SK-N-SH (cell line): ENCODE measurements at regions of chr1 and their contacts with region 1.

Region 1: GRCh38 chr1:145845514-145846161 is at the start of gene NUDT17:
- DNase-seq: peak; percentile 90
- H3K4me3 ChIP-seq: peak within 1 kb of the TSS; percentile 60 to 68
- H3K27ac ChIP-seq: peak within 1 kb of the TSS; percentile 49 to 73; a peak in 3 of 4 replicates
- H3K4me1 ChIP-seq: peaks cover 3 to 14% of the 10 kb centered on the region in 2 experiments; a peak in 2 of 4 replicates
- H3K27me3 ChIP-seq: no peaks in the 10 kb centered on the region
- CTCF ChIP-seq: peak; percentile 97
- EP300 ChIP-seq: 0 out of 4 replicates have a peak, but pooled peaks of 1 of the 2 experiments have one; percentile 26
- RAD21 ChIP-seq: peak; percentile 56
- polyA plus RNA-seq, gene NUDT17: 7.8 and 8.1 TPM in 2 replicates

Region 2: DNA sequence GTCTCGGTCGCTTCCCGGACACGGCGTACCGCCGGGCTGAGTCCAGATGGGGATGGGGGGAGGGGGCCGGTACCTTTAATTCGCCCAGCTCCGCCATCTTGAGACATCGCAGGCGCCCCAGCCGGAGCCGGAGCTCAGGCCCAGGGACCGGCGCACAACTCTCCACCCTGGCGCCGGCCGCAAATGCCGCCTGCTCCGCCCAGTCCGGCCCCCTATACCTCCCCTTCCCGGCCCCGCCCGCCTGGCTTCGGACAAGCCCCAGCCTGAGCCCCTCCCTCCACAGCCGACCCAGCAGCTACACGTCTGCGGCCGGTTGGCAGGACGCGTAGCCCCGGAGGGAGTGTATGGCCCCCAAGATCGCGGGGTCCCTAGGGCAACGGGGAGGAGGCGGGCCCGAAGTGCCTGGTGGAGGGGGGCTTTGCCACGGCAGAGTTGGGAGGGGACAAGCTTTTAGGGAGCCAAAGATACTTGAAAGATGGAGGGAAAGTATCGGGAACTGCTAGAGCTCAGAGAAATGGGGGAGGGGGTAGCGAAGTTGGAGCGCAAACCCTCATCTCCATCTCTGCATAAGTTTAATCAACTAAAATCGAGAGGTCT is 13.4 kb after region 1 on chr1 and contains the start of gene PIAS3:
- CTCF ChIA-PET with region 1: interaction called, 162 read pairs
- POLR2A ChIA-PET with region 1: interaction called, 66 read pairs
- DNase-seq: peak; percentile 98
- H3K4me3 ChIP-seq: peak within 1 kb of the TSS; percentile 66 to 83
- H3K27ac ChIP-seq: peak within 1 kb of the TSS; percentile 83 to 95
- H3K4me1 ChIP-seq: peaks cover 8 to 9% of the 10 kb centered on the region in 2 experiments; a peak in 3 of 4 replicates
- H3K27me3 ChIP-seq: no peaks in the 10 kb centered on the region
- CTCF ChIP-seq: no peak
- EP300 ChIP-seq: peak in 1 of 2 experiments; percentile 3; a peak in 1 of 4 replicates
- RAD21 ChIP-seq: no peak
- polyA plus RNA-seq, gene PIAS3: 35.5 and 39.1 TPM in 2 replicates

Region 3: GRCh38 chr1:145885738-145886287 is 40.2 kb after region 1 on chr1 and contains the start of gene ANKRD35:
- CTCF ChIA-PET with region 1: interaction called, 45 read pairs
- POLR2A ChIA-PET with region 1: no interaction called
- DNase-seq: peak; percentile 95
- H3K4me3 ChIP-seq: peak within 1 kb of the TSS; percentile 60 to 72
- H3K27ac ChIP-seq: no peak within 1 kb of the TSS
- H3K4me1 ChIP-seq: peaks cover 2 to 18% of the 10 kb centered on the region in 2 experiments; a peak in 3 of 4 replicates
- H3K27me3 ChIP-seq: no peaks in the 10 kb centered on the region
- CTCF ChIP-seq: no peak
- EP300 ChIP-seq: no peak
- RAD21 ChIP-seq: no peak
- polyA plus RNA-seq, gene ANKRD35: 0.05 and 0.08 TPM in 2 replicates

Region 4: GRCh38 chr1:145918144-145918992 is 72.7 kb after region 1 on chr1 and contains the start of gene PEX11B:
- CTCF ChIA-PET with region 1: interaction called, 16 read pairs
- POLR2A ChIA-PET with region 1: no interaction called
- DNase-seq: peak; percentile 90
- H3K4me3 ChIP-seq: peak within 1 kb of the TSS; percentile 83 to 86
- H3K27ac ChIP-seq: peak within 1 kb of the TSS; percentile 85 to 95
- H3K4me1 ChIP-seq: peaks cover 0 to 18% of the 10 kb centered on the region in 2 experiments; a peak in 2 of 4 replicates
- H3K27me3 ChIP-seq: no peaks in the 10 kb centered on the region
- CTCF ChIP-seq: no peak
- EP300 ChIP-seq: no peak
- RAD21 ChIP-seq: no peak
- polyA plus RNA-seq, gene PEX11B: 26.1 and 34.5 TPM in 2 replicates

Region 5: GRCh38 chr1:146007506-146008133 is 162.0 kb after region 1 on chr1:
- CTCF ChIA-PET with region 1: interaction called, 34 read pairs
- POLR2A ChIA-PET with region 1: no interaction called
- DNase-seq: no peak
- H3K4me3 ChIP-seq: no peak overlapping the region
- H3K27ac ChIP-seq: peak overlapping the region in 1 of 2 experiments; percentile 42; a peak in 1 of 4 replicates
- H3K4me1 ChIP-seq: peaks cover 2 to 3% of the 10 kb centered on the region in 2 experiments; a peak in 2 of 4 replicates
- H3K27me3 ChIP-seq: no peaks in the 10 kb centered on the region
- CTCF ChIP-seq: no peak
- EP300 ChIP-seq: no peak
- RAD21 ChIP-seq: no peak